ENCODE measurements at regions of chr13 and their contacts with region 1.

Region 1: GRCh38 chr13:50529154-50529882 is 314.2 kb downstream of the DLEU7 start:
- DNase-seq: peak; percentile 58 to 91 (median 78)

Region 2: GRCh38 chr13:49996951-49997895 is 532.1 kb before region 1 on chr13 and contains the start of gene TRIM13:
- intact Hi-C with region 1: loop called (anchors 10 kb)
- DNase-seq: peak; percentile 82 to 96 (median 91)

Region 3: GRCh38 chr13:50401049-50401505 is 128.2 kb before region 1 on chr13:
- intact Hi-C with region 1: loop called (anchors 10 kb)
- DNase-seq: peak in 32 of 42 donors; percentile 16 to 89 (median 56)

Region 4: DNA sequence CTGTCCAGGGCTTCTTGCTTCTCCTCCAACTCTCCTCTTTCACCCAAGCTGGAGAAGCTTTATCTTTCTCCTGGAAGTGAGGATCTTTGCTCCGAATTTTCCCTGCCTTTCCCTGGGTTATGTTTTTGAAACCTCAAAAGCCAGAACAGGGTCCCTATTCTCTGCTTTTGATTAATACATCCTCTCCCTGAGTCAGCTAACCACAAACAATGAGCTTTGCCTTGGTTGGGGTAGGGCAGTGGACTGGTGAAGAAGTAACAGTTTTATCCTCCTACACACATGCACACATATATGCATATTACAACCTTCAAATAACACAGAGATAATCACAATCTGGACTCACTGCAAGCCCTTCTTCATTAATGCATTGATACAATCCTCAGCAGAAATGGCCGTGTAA is 269.6 kb after region 1 on chr13:
- intact Hi-C with region 1: loop called (anchors 10 kb)
- DNase-seq: no peak

Region 5: GRCh38 chr13:51000571-51001260 is 471.4 kb after region 1 on chr13:
- intact Hi-C with region 1: no loop called
- DNase-seq: peak in 1 of 42 donors; percentile 63

Measured in head of caudate nucleus (tissue), 42 donors.